ENCODE measurements at regions of chr12 and their contacts with region 1.

Region 1: DNA sequence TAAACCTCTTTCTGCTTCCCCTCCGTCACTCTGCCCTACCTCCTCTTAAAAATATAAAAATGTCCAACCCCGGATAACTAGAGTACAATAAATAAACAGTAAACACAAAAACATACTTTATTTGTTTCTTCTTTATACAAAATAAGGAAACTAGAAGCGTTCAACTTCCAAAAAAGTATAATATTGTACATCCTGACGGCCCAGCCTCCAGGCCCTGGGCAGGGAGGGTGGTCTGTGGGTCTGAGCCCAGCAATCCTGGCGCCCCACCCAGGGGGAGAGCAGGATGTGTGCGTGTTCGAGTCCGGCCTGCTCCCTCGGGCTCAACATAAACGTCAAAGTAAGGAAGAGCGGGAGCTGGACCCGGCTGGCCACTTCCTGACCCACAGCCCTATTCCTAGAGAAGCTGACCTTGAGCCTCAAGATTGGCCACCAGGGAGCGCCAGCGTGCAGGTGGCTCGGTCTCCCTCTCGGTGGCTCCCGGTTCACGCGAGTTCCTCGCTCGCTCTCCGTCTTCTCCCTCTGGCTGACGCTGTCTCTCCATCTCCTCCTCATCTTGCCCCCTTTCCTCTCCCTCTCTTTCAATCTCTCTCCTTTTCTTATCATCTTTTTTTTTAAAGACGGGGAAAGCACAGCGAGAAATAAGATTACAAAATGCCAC is 9.4 kb downstream of the LHX5 start:
- H3K4me3 ChIP-seq: no peak overlapping the region
- H3K27ac ChIP-seq: no peak overlapping the region
- H3K4me1 ChIP-seq: no peaks in the 10 kb centered on the region
- CTCF ChIP-seq: peak; percentile 73

Region 2: GRCh38 chr12:113359939-113360748 is 102.1 kb before region 1 on chr12:
- CTCF ChIA-PET with region 1: no interaction called
- POLR2A ChIA-PET with region 1: no interaction called
- H3K4me3 ChIP-seq: no peak overlapping the region
- H3K27ac ChIP-seq: no peak overlapping the region
- H3K4me1 ChIP-seq: no peaks in the 10 kb centered on the region
- CTCF ChIP-seq: no peak

Region 3: GRCh38 chr12:113479590-113480335 is 17.5 kb after region 1 on chr12:
- CTCF ChIA-PET with region 1: interaction called, 11 read pairs
- POLR2A ChIA-PET with region 1: no interaction called
- H3K4me3 ChIP-seq: peak overlapping the region; percentile 3; the same call in 1 of the 2 replicates
- H3K27ac ChIP-seq: no peak overlapping the region
- H3K4me1 ChIP-seq: no peaks in the 10 kb centered on the region
- CTCF ChIP-seq: no peak

Measured in HEK293 (cell line).